ENCODE measurements at regions of chr7 and their contacts with region 1.

Region 1: GRCh38 chr7:22726345-22727185 is 435 bp upstream of the IL6 start:
- H3K4me3 Mint-ChIP-seq: peak overlapping the region; percentile 79
- H3K27ac Mint-ChIP-seq: peak overlapping the region; percentile 99
- H3K4me1 Mint-ChIP-seq: peaks cover 66% of the 10 kb centered on the region
- H3K27me3 Mint-ChIP-seq: peaks cover 13% of the 10 kb centered on the region

Region 2: GRCh38 chr7:22559829-22560489 is 166.6 kb before region 1 on chr7:
- intact Hi-C with region 1: loop called (anchors 1 kb)
- H3K4me3 Mint-ChIP-seq: no peak overlapping the region
- H3K27ac Mint-ChIP-seq: no peak overlapping the region
- H3K4me1 Mint-ChIP-seq: peaks cover 32% of the 10 kb centered on the region
- H3K27me3 Mint-ChIP-seq: peaks cover 40% of the 10 kb centered on the region

Region 3: DNA sequence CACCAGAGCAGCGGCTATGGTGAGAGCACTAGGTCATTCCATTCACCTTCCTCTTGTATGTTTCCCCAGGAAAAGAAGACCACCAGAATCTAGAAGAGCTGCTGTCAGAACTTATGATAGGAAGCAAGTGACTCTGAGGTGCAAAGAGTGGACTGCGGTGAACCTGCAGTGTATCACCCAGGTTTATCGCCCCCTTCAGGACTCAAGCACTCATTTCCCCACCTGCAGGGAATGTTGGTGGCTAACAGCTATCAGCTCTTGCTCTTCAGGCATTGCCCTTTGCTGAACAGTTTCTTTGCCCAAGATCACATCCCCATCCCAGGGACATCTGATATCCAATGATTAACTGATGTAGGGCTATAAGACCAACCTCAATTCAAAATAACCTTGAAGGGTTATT is 65.8 kb before region 1 on chr7:
- intact Hi-C with region 1: loop called (anchors 1 kb)
- H3K4me3 Mint-ChIP-seq: no peak overlapping the region
- H3K27ac Mint-ChIP-seq: peak overlapping the region; percentile 94
- H3K4me1 Mint-ChIP-seq: peaks cover 72% of the 10 kb centered on the region
- H3K27me3 Mint-ChIP-seq: peaks cover 13% of the 10 kb centered on the region

Region 4: DNA sequence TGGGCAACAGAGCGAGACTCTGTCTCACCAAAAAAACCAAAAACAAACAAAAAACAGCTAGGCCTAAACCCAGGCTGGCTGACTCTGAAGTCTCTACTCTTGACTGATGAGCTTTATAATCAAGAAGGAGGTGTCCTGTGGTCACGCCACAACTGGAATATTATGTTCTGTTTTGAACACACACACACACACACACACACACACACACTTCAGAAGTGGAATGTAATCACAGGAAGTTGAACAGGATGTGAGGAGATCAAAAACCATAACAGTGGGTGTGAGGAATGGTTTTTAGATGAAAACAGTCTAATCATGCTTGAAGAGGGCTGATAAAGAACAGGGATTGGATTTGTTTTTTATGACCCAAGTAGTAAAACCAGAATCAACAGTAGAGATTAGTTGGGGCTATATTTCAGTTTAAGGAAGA is 50.6 kb before region 1 on chr7:
- intact Hi-C with region 1: loop called (anchors 5 kb)
- H3K4me3 Mint-ChIP-seq: no peak overlapping the region
- H3K27ac Mint-ChIP-seq: peak overlapping the region; percentile 67
- H3K4me1 Mint-ChIP-seq: peaks cover 59% of the 10 kb centered on the region
- H3K27me3 Mint-ChIP-seq: peaks cover 12% of the 10 kb centered on the region

Region 5: DNA sequence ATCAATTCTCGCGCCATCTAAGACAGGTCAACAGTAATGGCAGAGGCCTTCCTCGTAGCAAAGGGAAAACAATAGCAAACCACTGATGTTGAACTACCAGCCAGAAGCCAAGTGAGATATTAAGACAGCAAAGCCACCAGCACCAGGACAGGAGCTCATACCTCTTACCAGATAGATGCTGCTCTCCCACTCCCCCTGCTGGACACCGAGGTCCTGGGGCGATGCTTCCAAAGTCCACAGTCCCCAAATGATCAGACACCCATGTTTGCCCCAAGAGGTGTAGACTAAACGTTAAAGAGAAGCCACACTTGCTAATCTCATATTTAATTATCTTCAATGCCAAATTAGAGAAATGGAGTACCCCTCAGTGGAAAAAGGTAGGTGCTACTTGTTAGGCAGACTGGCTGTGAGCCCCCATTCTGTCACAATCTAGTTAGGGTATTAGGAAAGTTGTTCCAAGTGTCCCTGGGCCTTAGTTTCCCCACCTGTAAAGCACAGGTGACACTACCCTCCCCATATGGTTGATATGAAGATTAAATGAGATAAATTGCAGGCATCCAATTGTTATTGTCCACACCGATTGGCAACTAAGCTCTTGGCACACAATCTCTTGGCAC is 56.2 kb after region 1 on chr7:
- intact Hi-C with region 1: loop called (anchors 5 kb)
- H3K4me3 Mint-ChIP-seq: no peak overlapping the region
- H3K27ac Mint-ChIP-seq: no peak overlapping the region
- H3K4me1 Mint-ChIP-seq: no peaks in the 10 kb centered on the region
- H3K27me3 Mint-ChIP-seq: peaks cover 7% of the 10 kb centered on the region

Measured in dendritic cell treated with granulocyte-macrophage colony-stimulating factor and Interleukin-4, amounts not matched to agents 40 ng/mL and 50 ng/mL, for 4 days (primary cell).